ENCODE measurements at regions of chr2 and their contacts with region 1.

Region 1: GRCh38 chr2:70301344-70302194 is at the start of gene FAM136A:
- DNase-seq: peak; percentile 86 to 89 (median 86)
- H3K4me3 ChIP-seq: peak within 1 kb of the TSS; percentile 72 to 80
- H3K4me3 Mint-ChIP-seq: peak within 1 kb of the TSS; percentile 84 to 97 (median 93)
- H3K27ac ChIP-seq: peak within 1 kb of the TSS; percentile 79
- H3K27ac Mint-ChIP-seq: peak within 1 kb of the TSS; percentile 77 to 94 (median 91)
- H3K4me1 ChIP-seq: peaks cover 8% of the 10 kb centered on the region
- H3K4me1 Mint-ChIP-seq: peaks cover 15 to 26% (median 22%) of the 10 kb centered on the region in 4 donors
- H3K27me3 ChIP-seq: no peaks in the 10 kb centered on the region
- H3K27me3 Mint-ChIP-seq: no peaks in the 10 kb centered on the region
- total RNA-seq, gene FAM136A: 26.2 to 27.4 TPM

Region 2: DNA sequence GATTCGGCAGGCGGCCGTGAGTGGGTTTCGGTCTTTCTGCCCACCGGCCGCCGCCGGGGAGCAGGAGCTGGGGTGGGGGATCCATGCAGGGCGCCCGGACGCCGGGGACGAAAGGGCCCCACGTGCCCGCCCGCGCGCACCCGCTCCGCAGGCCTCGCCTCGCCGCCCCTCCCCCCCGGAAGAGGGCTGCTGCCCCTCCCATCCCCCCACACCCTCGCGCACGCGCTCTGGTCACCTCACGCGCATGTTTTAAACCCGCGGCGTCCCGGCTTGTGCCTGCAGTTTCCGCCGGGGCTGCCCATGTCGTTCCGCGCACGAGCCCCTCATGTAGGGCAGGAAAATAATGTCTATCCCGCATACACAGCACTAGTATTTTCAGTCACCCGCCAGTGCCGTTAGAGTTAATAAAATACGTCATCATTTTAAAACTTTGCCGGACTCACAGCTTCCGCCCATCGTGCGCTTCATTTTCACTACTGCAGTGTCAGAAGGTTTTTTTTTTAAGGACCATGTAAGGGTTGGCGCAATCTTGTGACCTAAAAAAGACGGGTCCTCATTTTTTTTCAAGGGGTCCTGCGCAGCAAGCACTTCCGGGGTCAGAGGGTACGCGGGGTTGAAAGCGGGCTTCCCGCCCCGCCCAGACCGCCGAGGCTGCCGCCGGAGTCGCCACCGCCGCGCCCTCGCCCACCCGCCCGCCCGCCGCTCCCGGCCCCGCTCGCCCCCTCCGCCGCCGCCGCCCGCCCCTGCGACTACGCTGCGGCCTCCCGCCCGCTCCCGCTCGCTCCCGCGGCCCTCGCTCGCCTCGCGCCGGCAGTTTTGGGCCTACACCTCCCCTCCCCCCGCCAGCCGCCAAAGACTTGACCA is 214.5 kb before region 1 on chr2 and contains the start of gene PCBP1:
- CTCF ChIA-PET with region 1: interaction called, 3 read pairs
- POLR2A ChIA-PET with region 1: interaction called, 3 read pairs
- intact Hi-C with region 1: loop called (anchors 10 kb)
- DNase-seq: peak; percentile 93 to 99 (median 97)
- H3K4me3 ChIP-seq: peak within 1 kb of the TSS; percentile 74 to 84
- H3K4me3 Mint-ChIP-seq: peak within 1 kb of the TSS; percentile 93 to 99 (median 96)
- H3K27ac ChIP-seq: peak within 1 kb of the TSS; percentile 99
- H3K27ac Mint-ChIP-seq: peak within 1 kb of the TSS; percentile 99 to 100 (median 100)
- H3K4me1 ChIP-seq: peaks cover 68% of the 10 kb centered on the region
- H3K4me1 Mint-ChIP-seq: peaks cover 47 to 93% (median 59%) of the 10 kb centered on the region in 4 donors
- H3K27me3 ChIP-seq: no peaks in the 10 kb centered on the region
- H3K27me3 Mint-ChIP-seq: peaks cover 3% of the 10 kb centered on the region in 2 donors
- total RNA-seq, gene PCBP1: 372 to 383 TPM

Region 3: GRCh38 chr2:70258532-70258874 is 43.1 kb before region 1 on chr2:
- CTCF ChIA-PET with region 1: interaction called, 7 read pairs
- POLR2A ChIA-PET with region 1: interaction called, 11 read pairs
- intact Hi-C with region 1: no loop called
- DNase-seq: peak in 1 of 5 donors; percentile 39
- H3K4me3 ChIP-seq: peak overlapping the region; percentile 10 to 79
- H3K4me3 Mint-ChIP-seq: peak overlapping the region; percentile 87 to 97 (median 93)
- H3K27ac ChIP-seq: peak overlapping the region; percentile 57
- H3K27ac Mint-ChIP-seq: peak overlapping the region; percentile 8 to 86 (median 69)
- H3K4me1 ChIP-seq: peaks cover 17% of the 10 kb centered on the region
- H3K4me1 Mint-ChIP-seq: peaks cover 26 to 48% (median 36%) of the 10 kb centered on the region in 4 donors
- H3K27me3 ChIP-seq: no peaks in the 10 kb centered on the region
- H3K27me3 Mint-ChIP-seq: no peaks in the 10 kb centered on the region

Region 4: GRCh38 chr2:70616168-70616694 is 314.7 kb after region 1 on chr2:
- CTCF ChIA-PET with region 1: interaction called, 136 read pairs
- POLR2A ChIA-PET with region 1: interaction called, 7 read pairs
- intact Hi-C with region 1: loop called (anchors 1 kb)
- DNase-seq: no peak
- H3K4me3 ChIP-seq: no peak overlapping the region
- H3K4me3 Mint-ChIP-seq: no peak overlapping the region
- H3K27ac ChIP-seq: no peak overlapping the region
- H3K27ac Mint-ChIP-seq: no peak overlapping the region
- H3K4me1 ChIP-seq: no peaks in the 10 kb centered on the region
- H3K4me1 Mint-ChIP-seq: no peaks in the 10 kb centered on the region
- H3K27me3 ChIP-seq: no peaks in the 10 kb centered on the region
- H3K27me3 Mint-ChIP-seq: peaks cover 4 to 19% of the 10 kb centered on the region in 2 donors

Region 5: DNA sequence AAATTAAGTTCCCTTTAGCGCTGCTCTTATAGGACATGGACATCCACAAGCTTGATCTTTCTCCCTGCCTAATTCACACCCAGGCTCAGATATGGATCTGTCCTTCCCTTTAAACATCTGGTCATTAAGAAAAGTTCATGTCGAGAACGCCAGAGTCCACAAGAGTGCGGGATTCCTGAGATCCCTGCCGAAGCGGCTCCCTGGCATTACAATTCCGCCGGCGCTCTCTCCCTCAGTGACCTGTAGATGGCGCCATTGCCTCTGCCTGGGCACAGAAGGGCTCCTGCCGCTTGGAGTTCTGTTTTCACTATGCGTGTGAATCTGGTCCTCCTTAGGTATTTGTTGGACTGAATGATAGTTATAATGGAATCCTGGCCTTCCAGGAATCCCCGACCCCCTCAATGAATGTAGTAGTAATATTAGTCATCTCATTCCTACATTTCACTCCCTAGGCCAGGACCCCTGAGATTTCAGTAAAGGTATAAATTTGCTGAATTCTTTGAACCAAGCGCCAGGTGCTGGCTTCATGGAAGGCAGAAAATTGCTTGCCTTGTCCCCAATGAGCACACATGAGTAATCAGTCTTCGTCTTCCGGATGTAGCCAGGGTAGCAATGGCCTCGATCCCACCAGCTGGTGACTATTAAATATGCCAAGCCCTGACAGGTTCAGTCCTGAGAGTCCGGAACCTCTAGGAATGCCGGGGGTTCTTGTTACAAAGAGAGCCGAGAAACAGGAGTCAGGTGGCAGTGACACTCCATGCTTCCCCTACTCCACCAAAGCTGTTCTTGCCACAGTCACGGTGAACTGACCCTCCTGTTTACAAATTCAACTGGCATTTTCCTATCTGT is 560.4 kb after region 1 on chr2:
- CTCF ChIA-PET with region 1: no interaction called
- POLR2A ChIA-PET with region 1: no interaction called
- intact Hi-C with region 1: loop called (anchors 10 kb)
- DNase-seq: peak; percentile 49 to 60 (median 56)
- H3K4me3 ChIP-seq: no peak overlapping the region
- H3K4me3 Mint-ChIP-seq: no peak overlapping the region
- H3K27ac ChIP-seq: no peak overlapping the region
- H3K27ac Mint-ChIP-seq: no peak overlapping the region
- H3K4me1 ChIP-seq: no peaks in the 10 kb centered on the region
- H3K4me1 Mint-ChIP-seq: peaks cover 0 to 3% (median 1%) of the 10 kb centered on the region in 4 donors
- H3K27me3 ChIP-seq: peaks cover 12% of the 10 kb centered on the region
- H3K27me3 Mint-ChIP-seq: peaks cover 29 to 50% of the 10 kb centered on the region in 2 donors